Activated T-helper 2 cell treated with anti-CD3 and anti-CD28 coated beads, Interferon-gamma antibody, Interleukin-2, Interleukin-4, amounts not matched to agents 10 μg/mL and 5 μg/mL and 100 μg/mL, durations not matched to agents 14 hours and 24 hours and 36 hours (primary cell): ENCODE measurements at regions of chr20 and their contacts with region 1.

Region 1: GRCh38 chr20:51372176-51372803 is 170.2 kb downstream of the NFATC2 start:
- DNase-seq: peak; percentile 30
- H3K4me3 Mint-ChIP-seq: no peak overlapping the region
- H3K27ac Mint-ChIP-seq: no peak overlapping the region
- H3K4me1 Mint-ChIP-seq: peaks cover 2% of the 10 kb centered on the region
- H3K27me3 Mint-ChIP-seq: no peaks in the 10 kb centered on the region

Region 2: GRCh38 chr20:50844430-50845100 is 527.7 kb before region 1 on chr20:
- intact Hi-C with region 1: no loop called
- DNase-seq: peak; percentile 18
- H3K4me3 Mint-ChIP-seq: no peak overlapping the region
- H3K27ac Mint-ChIP-seq: no peak overlapping the region
- H3K4me1 Mint-ChIP-seq: peaks cover 8% of the 10 kb centered on the region
- H3K27me3 Mint-ChIP-seq: no peaks in the 10 kb centered on the region

Region 3: GRCh38 chr20:51404298-51405060 is 32.2 kb after region 1 on chr20:
- intact Hi-C with region 1: no loop called
- DNase-seq: peak; percentile 84
- H3K4me3 Mint-ChIP-seq: peak overlapping the region; percentile 28
- H3K27ac Mint-ChIP-seq: peak overlapping the region; percentile 95
- H3K4me1 Mint-ChIP-seq: peaks cover 88% of the 10 kb centered on the region
- H3K27me3 Mint-ChIP-seq: no peaks in the 10 kb centered on the region

Region 4: DNA sequence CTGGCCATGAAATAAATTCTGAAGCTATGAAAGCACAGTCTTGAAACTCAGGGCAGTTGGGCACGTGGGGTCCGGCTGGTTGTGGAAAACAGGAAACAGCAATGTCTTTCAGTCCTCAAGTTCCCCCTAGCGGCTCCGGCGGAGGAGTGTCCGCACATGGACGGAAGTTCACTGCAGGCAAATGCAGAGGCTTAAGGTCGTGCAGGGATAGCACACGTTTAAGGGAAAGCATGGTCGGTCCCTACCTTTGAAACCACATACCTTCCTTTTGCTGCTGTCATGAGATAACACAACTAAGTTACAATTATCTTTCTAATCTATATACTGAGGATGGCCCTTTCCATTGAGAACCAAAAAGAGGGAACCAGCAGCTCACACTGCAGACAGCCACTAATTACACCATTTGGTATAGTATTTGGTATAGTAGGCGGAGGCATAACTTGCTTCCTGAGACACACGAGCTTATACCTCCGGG is 222.8 kb after region 1 on chr20:
- intact Hi-C with region 1: loop called (anchors 2 kb)
- DNase-seq: peak; percentile 72
- H3K4me3 Mint-ChIP-seq: peak overlapping the region; percentile 17
- H3K27ac Mint-ChIP-seq: peak overlapping the region; percentile 65
- H3K4me1 Mint-ChIP-seq: peaks cover 46% of the 10 kb centered on the region
- H3K27me3 Mint-ChIP-seq: no peaks in the 10 kb centered on the region

Region 5: GRCh38 chr20:51624157-51624731 is 252.0 kb after region 1 on chr20:
- intact Hi-C with region 1: loop called (anchors 1 kb)
- DNase-seq: peak; percentile 44
- H3K4me3 Mint-ChIP-seq: no peak overlapping the region
- H3K27ac Mint-ChIP-seq: no peak overlapping the region
- H3K4me1 Mint-ChIP-seq: peaks cover 15% of the 10 kb centered on the region
- H3K27me3 Mint-ChIP-seq: no peaks in the 10 kb centered on the region

Region 6: DNA sequence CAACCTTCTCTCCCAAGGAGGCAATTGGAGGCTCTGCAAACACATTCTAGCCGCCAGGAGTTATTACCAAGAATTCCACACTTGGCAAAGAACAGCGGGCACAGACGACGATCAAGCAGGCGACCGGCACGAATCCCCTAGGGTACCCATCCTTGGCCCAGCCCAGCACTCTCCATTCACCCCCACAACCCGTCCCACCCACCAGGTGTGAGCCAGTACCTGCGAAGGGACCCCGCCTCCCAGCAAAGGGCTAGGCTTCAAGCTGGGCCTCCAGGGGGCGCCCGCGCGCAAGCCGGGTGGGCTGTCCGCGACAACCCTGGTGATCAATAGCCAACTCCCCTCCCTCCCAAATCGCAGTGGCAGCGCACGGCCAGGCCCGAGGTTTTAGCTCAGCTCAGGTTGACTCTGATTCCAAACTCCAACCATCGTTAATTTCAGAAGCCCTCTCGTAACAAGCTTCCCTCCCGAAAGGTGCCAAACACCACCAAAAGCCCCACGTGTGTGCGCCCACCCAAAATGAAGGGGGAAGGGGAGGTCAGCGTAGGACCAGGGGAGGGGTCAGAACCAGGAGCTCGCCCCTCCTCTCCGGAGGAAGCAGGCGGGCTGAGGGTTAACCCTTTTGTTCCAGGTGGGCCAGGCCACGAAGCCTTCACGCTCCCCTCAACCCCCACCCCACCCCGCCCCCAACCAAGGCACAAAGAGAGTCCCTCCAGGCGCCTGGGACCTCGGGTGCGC is 427.9 kb after region 1 on chr20:
- intact Hi-C with region 1: no loop called
- DNase-seq: peak; percentile 46
- H3K4me3 Mint-ChIP-seq: peak overlapping the region; percentile 60
- H3K27ac Mint-ChIP-seq: no peak overlapping the region
- H3K4me1 Mint-ChIP-seq: peaks cover 13% of the 10 kb centered on the region
- H3K27me3 Mint-ChIP-seq: peaks cover 57% of the 10 kb centered on the region